ENCODE measurements at regions of chr16 and their contacts with region 1.

Region 1: GRCh38 chr16:25051406-25052150 is 36.4 kb upstream of the ARHGAP17 start:
- DNase-seq: no peak
- ATAC-seq: no peak
- H3K4me3 Mint-ChIP-seq: peak overlapping the region in 9 of 10 donors; percentile 6 to 94 (median 59)
- H3K27ac Mint-ChIP-seq: peak overlapping the region; percentile 49 to 99 (median 82)
- H3K4me1 Mint-ChIP-seq: peaks cover 19 to 55% (median 46%) of the 10 kb centered on the region in 4 donors
- H3K27me3 Mint-ChIP-seq: no peaks in the 10 kb centered on the region

Region 2: GRCh38 chr16:25031441-25032307 is 19.9 kb before region 1 on chr16:
- POLR2A ChIA-PET with region 1: interaction called, 55 read pairs
- DNase-seq: peak; percentile 81 to 95 (median 91)
- ATAC-seq: peak; percentile 100
- H3K4me3 Mint-ChIP-seq: peak overlapping the region; percentile 84 to 99 (median 96)
- H3K27ac Mint-ChIP-seq: peak overlapping the region; percentile 36 to 97 (median 88)
- H3K4me1 Mint-ChIP-seq: peaks cover 34 to 46% (median 35%) of the 10 kb centered on the region in 4 donors
- H3K27me3 Mint-ChIP-seq: no peaks in the 10 kb centered on the region

Region 3: GRCh38 chr16:25066747-25067631 is 15.4 kb after region 1 on chr16:
- POLR2A ChIA-PET with region 1: interaction called, 50 read pairs
- DNase-seq: peak; percentile 49 to 91 (median 78)
- ATAC-seq: peak; percentile 94 to 95
- H3K4me3 Mint-ChIP-seq: peak overlapping the region; percentile 82 to 97 (median 94)
- H3K27ac Mint-ChIP-seq: peak overlapping the region; percentile 76 to 96 (median 94)
- H3K4me1 Mint-ChIP-seq: peaks cover 19 to 56% (median 54%) of the 10 kb centered on the region in 4 donors
- H3K27me3 Mint-ChIP-seq: no peaks in the 10 kb centered on the region

Region 4: GRCh38 chr16:25087761-25088160 is 36.2 kb after region 1 on chr16:
- POLR2A ChIA-PET with region 1: no interaction called
- DNase-seq: no peak
- ATAC-seq: no peak
- H3K4me3 Mint-ChIP-seq: no peak overlapping the region
- H3K27ac Mint-ChIP-seq: peak overlapping the region in 1 of 10 donors; percentile 0
- H3K4me1 Mint-ChIP-seq: peaks cover 2 to 15% (median 8%) of the 10 kb centered on the region in 4 donors
- H3K27me3 Mint-ChIP-seq: no peaks in the 10 kb centered on the region

Region 5: DNA sequence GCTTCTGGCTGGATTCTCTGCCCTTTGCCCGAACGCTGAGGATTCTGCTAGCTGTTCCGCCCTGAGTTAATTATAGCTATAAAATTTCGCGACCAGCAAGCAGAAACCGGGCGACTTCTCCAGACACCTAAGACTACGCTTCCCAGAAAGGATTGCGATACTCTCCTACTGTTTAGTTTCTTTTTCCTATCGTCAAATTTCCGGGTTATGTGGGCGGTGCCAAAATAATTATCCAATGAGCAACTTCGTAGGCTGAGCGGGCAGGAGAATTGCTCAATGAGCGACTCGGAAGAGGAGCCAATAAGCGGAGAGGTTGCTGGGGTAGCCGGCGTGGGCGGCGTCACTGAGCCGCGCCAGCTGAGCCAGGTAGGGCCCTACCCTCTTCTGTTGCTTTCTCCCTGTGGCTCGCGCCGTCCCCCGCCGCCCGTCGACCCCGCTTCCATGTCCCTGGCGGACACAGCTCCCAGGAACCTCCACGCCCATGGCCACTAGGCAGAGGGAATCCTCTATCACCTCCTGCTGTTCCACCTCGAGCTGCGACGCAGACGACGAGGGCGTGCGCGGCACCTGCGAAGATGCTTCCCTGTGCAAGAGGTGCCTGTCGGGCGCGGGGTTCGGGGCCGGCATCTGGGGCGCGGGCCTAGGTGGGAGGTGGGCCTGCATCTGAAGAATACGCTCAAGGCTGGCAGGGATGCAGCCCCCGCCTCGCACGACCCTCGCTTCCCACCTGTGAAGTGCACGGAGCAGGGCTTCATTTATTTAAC is 60.0 kb after region 1 on chr16 and contains the start of gene LCMT1:
- POLR2A ChIA-PET with region 1: interaction called, 245 read pairs
- DNase-seq: peak; percentile 79 to 96 (median 91)
- ATAC-seq: peak; percentile 91 to 92
- H3K4me3 Mint-ChIP-seq: peak within 1 kb of the TSS; percentile 92 to 99 (median 96)
- H3K27ac Mint-ChIP-seq: peak within 1 kb of the TSS; percentile 76 to 96 (median 94)
- H3K4me1 Mint-ChIP-seq: peaks cover 39 to 77% (median 68%) of the 10 kb centered on the region in 4 donors
- H3K27me3 Mint-ChIP-seq: no peaks in the 10 kb centered on the region
- polyA plus RNA-seq, gene LCMT1: 38.7 to 41.4 (median 40.6) TPM

Measured in naive thymus-derived CD8-positive, alpha-beta T cell (primary cell).